ENCODE measurements at regions of chr3 and their contacts with region 1.

Region 1: GRCh38 chr3:121796970-121797369 is 37.9 kb downstream of the IQCB1 start:
- DNase-seq: no peak
- ATAC-seq: no peak
- H3K4me3 ChIP-seq: no peak overlapping the region
- H3K4me3 Mint-ChIP-seq: no peak overlapping the region
- H3K27ac ChIP-seq: no peak overlapping the region
- H3K27ac Mint-ChIP-seq: no peak overlapping the region
- H3K4me1 ChIP-seq: no peaks in the 10 kb centered on the region
- H3K4me1 Mint-ChIP-seq: peaks cover 0 to 12% (median 7%) of the 10 kb centered on the region in 3 donors
- H3K27me3 ChIP-seq: no peaks in the 10 kb centered on the region
- H3K27me3 Mint-ChIP-seq: no peaks in the 10 kb centered on the region

Region 2: GRCh38 chr3:122283796-122284445 is 487.0 kb after region 1 on chr3:
- CTCF ChIA-PET with region 1: no interaction called
- POLR2A ChIA-PET with region 1: interaction called in 1 of 2 experiments, 10 read pairs
- DNase-seq: no peak
- ATAC-seq: no peak
- H3K4me3 ChIP-seq: no peak overlapping the region
- H3K4me3 Mint-ChIP-seq: no peak overlapping the region
- H3K27ac ChIP-seq: no peak overlapping the region
- H3K27ac Mint-ChIP-seq: no peak overlapping the region
- H3K4me1 ChIP-seq: peaks cover 0 to under 1% of the 10 kb centered on the region in 2 experiments
- H3K4me1 Mint-ChIP-seq: peaks cover 0 to 2% (median under 1%) of the 10 kb centered on the region in 3 donors
- H3K27me3 ChIP-seq: peaks cover 0 to 10% of the 10 kb centered on the region in 2 experiments
- H3K27me3 Mint-ChIP-seq: peaks cover 2 to 11% of the 10 kb centered on the region in 2 donors

Measured in T-cell (primary cell).